CD4-positive, alpha-beta memory T cell (primary cell): ENCODE measurements at regions of chr2 and their contacts with region 1.

Region 1: GRCh38 chr2:192162392-192163042 is 32.2 kb downstream of the TMEFF2 start:
- DNase-seq: peak; percentile 57 to 70 (median 64)
- H3K4me3 ChIP-seq: no peak overlapping the region
- H3K4me3 Mint-ChIP-seq: peak overlapping the region in 3 of 8 donors; percentile 11 to 43 (median 43)
- H3K27ac ChIP-seq: no peak overlapping the region
- H3K27ac Mint-ChIP-seq: no peak overlapping the region
- H3K4me1 ChIP-seq: peaks cover 9% of the 10 kb centered on the region
- H3K4me1 Mint-ChIP-seq: peaks cover 8 to 11% (median 10%) of the 10 kb centered on the region in 4 donors
- H3K27me3 ChIP-seq: no peaks in the 10 kb centered on the region
- H3K27me3 Mint-ChIP-seq: peaks cover 5 to 13% of the 10 kb centered on the region in 2 donors

Region 2: DNA sequence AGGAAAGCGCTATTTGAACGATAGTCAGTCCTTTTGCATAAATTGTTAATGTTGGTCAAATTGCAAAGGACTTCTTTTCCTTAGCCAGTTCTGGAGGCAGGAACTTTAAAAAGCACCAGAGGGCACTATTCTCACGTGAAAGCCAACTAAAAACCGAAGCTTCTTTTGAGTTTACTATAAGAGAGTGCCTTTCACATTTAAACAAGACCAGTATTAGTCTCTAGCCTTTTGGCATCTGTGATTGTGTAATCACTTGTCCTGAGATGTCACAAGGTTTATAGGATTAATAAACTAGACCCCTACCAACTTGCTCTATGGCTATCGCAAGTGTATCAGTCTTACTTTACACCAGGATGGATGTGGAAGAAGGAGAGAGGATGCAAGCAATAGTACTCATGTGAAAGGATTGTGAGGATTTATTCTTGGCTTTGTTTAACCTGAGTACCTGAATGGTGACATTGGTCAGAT is 997.3 kb before region 1 on chr2:
- CTCF ChIA-PET with region 1: interaction called, 21 read pairs
- POLR2A ChIA-PET with region 1: no interaction called
- intact Hi-C with region 1: loop called (anchors 1 kb)
- DNase-seq: peak in 4 of 5 donors; percentile 45 to 57 (median 48)
- H3K4me3 ChIP-seq: no peak overlapping the region
- H3K4me3 Mint-ChIP-seq: no peak overlapping the region
- H3K27ac ChIP-seq: no peak overlapping the region
- H3K27ac Mint-ChIP-seq: peak overlapping the region in 2 of 7 donors; percentile 54 to 77
- H3K4me1 ChIP-seq: no peaks in the 10 kb centered on the region
- H3K4me1 Mint-ChIP-seq: peaks cover 5 to 6% (median 6%) of the 10 kb centered on the region in 4 donors
- H3K27me3 ChIP-seq: no peaks in the 10 kb centered on the region
- H3K27me3 Mint-ChIP-seq: peaks cover 0 to under 1% of the 10 kb centered on the region in 2 donors

Region 3: DNA sequence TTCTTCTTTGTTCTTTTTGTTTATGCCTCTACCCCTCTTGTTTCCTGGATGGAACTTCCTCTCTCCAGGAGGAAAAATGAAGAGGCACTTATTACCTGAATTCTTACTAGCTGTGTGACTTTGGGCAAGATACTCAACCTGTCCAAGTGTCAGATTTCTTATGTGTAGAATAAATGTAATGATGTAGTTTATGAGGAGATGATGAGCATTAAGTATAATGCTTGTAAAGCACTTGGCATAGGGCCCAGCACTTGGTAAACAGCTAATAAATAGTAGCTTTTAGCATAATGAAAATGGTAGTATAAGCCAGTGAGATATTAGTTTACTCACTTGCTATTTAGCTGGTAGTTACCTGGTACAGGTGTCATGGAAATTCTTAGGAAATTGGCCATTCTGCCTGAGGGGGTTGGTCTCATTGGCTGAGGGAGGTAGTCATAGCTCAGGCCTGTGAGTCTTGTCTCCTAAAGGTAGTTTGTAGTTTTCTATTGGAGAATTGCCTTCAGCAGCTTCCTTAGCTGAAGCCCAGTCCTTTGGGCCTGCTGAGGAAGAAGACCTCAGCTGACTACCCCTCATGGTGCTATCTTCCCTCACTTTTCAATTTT is 618.0 kb before region 1 on chr2:
- CTCF ChIA-PET with region 1: interaction called, 28 read pairs
- POLR2A ChIA-PET with region 1: no interaction called
- intact Hi-C with region 1: no loop called
- DNase-seq: no peak
- H3K4me3 ChIP-seq: no peak overlapping the region
- H3K4me3 Mint-ChIP-seq: no peak overlapping the region
- H3K27ac ChIP-seq: no peak overlapping the region
- H3K27ac Mint-ChIP-seq: no peak overlapping the region
- H3K4me1 ChIP-seq: no peaks in the 10 kb centered on the region
- H3K4me1 Mint-ChIP-seq: no peaks in the 10 kb centered on the region
- H3K27me3 ChIP-seq: no peaks in the 10 kb centered on the region
- H3K27me3 Mint-ChIP-seq: peaks cover 2 to 4% of the 10 kb centered on the region in 2 donors

Region 4: DNA sequence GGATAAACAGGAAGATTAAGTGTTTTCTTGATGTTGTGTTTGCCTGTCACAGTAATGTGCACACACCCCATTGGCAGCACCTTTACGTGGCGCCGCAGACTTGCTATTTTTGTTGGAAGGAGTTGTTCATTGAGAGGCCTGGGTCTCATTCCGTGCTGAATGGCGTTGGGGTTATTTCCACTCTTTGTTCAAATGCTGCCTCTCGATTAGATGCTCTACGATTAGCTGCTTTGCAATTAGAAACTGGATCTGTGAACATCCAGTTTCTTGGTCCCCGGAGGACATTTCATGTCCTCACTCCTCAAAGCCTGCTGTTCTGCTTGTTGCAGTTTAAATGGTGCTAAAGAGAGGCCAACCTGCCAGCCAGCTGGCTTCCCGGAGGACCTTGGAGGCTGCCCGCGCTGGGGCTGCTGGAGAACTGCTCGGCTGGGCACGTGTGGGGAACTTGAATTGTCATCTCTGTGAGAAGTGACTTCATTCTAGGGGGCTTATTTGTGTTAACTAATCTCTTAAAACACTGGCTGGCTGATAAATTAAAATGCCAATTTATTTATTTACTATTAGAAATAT is 602.0 kb before region 1 on chr2:
- CTCF ChIA-PET with region 1: interaction called, 237 read pairs
- POLR2A ChIA-PET with region 1: no interaction called
- intact Hi-C with region 1: loop called (anchors 1 kb)
- DNase-seq: no peak
- H3K4me3 ChIP-seq: no peak overlapping the region
- H3K4me3 Mint-ChIP-seq: no peak overlapping the region
- H3K27ac ChIP-seq: no peak overlapping the region
- H3K27ac Mint-ChIP-seq: peak overlapping the region in 1 of 7 donors; percentile 11
- H3K4me1 ChIP-seq: no peaks in the 10 kb centered on the region
- H3K4me1 Mint-ChIP-seq: peaks cover 0 to 3% (median 0%) of the 10 kb centered on the region in 4 donors
- H3K27me3 ChIP-seq: peaks cover 7% of the 10 kb centered on the region
- H3K27me3 Mint-ChIP-seq: peaks cover 13 to 21% of the 10 kb centered on the region in 2 donors

Region 5: DNA sequence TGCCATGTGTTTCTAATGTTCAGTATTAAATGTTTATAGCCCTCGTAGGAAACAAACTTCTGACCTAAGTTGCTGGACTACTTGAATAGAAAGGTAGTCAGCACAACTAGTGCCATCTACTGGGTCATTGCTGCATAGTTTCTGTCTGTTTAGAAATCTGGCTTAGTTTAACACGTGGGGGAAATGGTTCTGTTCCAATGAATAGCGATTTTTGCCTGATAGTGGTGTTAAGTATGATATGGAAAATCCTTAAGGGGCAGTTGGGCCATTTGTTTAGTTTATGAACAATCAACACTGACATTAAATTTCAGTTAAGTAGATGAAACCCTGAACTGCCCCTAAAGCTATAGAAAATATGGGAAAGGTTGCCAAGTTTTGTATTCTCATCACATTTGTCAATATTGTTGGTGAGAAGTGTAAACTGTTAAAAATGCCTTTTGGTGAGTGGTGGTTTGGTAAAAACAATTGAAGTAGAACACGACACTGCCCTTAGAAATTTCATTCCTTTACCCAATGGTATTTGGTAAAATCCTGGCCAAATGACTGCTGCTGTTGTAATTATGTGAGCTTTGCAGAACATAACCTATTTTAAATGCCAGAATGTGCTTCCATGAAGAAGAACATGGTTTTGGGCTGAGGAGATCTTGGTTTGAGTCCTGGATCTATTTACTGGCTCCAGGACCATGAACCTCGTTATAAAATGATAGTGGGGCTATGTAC is 471.3 kb before region 1 on chr2:
- CTCF ChIA-PET with region 1: interaction called, 18 read pairs
- POLR2A ChIA-PET with region 1: no interaction called
- intact Hi-C with region 1: loop called (anchors 1 kb)
- DNase-seq: peak; percentile 61 to 67 (median 65)
- H3K4me3 ChIP-seq: no peak overlapping the region
- H3K4me3 Mint-ChIP-seq: no peak overlapping the region
- H3K27ac ChIP-seq: no peak overlapping the region
- H3K27ac Mint-ChIP-seq: peak overlapping the region; percentile 40 to 90 (median 73)
- H3K4me1 ChIP-seq: peaks cover 30% of the 10 kb centered on the region
- H3K4me1 Mint-ChIP-seq: peaks cover 20 to 46% (median 32%) of the 10 kb centered on the region in 4 donors
- H3K27me3 ChIP-seq: no peaks in the 10 kb centered on the region
- H3K27me3 Mint-ChIP-seq: no peaks in the 10 kb centered on the region

Region 6: DNA sequence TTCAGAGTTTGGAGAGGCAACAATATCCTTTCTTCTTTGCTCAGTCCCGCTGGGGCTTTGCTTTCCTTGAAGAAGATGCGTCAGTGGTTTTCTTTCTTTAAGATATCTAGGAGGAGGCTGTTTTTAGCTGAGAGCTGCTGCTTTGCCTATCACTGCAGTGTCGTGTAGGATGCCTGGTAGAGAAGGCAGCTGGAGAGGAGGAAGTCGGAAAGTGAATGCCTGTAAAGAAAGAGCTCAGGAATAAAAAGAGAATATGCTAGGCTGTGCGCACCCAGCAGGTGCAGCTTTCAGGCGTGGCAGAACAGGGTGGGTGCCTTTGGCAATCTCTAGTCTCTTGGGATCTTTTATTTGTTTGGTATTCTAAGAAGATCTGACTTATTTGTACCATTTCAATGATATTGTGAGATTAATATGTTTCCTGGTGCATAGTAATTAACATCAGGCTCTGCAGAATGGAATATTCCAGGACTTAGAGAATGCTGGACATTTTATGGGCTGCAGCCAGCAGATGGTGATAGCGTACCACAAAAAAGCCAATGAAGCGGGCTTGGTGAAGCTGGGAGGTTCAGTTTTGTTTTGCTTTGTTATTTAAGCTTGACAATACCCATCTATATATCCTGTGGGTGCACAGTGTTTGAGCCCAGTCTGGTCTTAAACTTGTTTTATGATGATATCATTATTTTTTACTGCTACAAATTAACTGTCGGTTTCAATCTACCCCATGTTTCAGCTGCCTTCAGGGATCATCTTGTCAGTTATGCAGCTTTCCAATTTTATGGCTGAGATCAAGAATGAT is 350.5 kb before region 1 on chr2:
- CTCF ChIA-PET with region 1: interaction called, 16 read pairs
- POLR2A ChIA-PET with region 1: no interaction called
- intact Hi-C with region 1: loop called (anchors 1 kb)
- DNase-seq: peak in 4 of 5 donors; percentile 5 to 16 (median 10)
- H3K4me3 ChIP-seq: no peak overlapping the region
- H3K4me3 Mint-ChIP-seq: no peak overlapping the region
- H3K27ac ChIP-seq: no peak overlapping the region
- H3K27ac Mint-ChIP-seq: no peak overlapping the region
- H3K4me1 ChIP-seq: no peaks in the 10 kb centered on the region
- H3K4me1 Mint-ChIP-seq: peaks cover 0 to 1% (median 0%) of the 10 kb centered on the region in 4 donors
- H3K27me3 ChIP-seq: no peaks in the 10 kb centered on the region
- H3K27me3 Mint-ChIP-seq: peaks cover 8 to 13% of the 10 kb centered on the region in 2 donors

Region 7: DNA sequence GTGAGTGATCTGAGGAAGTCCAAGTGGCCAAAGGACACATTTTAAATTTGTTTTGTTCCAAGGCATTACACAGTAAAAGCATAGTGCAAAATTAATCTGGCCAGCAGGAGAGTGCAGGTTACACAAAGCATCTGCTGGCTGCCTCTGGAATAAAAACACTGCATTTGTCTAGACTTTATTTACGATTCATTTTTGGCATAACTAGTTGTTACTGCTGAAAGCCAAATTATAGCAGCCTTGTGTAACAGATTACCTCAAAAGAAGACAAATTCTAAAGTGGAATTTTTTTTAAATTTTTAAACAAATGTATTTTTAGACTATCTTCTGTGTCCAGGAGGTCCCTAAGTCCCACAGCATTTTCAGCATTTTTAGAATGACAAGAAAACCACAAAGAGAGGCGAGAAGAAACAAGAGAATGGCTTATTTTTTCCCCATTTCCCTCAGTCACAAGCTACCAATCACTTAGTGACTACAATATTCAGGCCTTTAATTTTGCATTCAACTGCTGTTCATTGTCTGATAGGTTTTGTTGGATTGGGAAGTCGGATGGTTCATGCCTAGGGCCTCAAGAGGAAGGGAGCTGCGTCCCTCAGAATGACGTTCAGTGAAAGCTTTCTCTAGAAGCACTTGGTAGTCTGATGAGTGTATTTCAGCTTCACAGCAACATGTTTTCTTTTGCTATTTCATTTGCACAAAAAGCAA is 13.7 kb before region 1 on chr2:
- CTCF ChIA-PET with region 1: interaction called, 11 read pairs
- POLR2A ChIA-PET with region 1: no interaction called
- intact Hi-C with region 1: no loop called
- DNase-seq: no peak
- H3K4me3 ChIP-seq: no peak overlapping the region
- H3K4me3 Mint-ChIP-seq: no peak overlapping the region
- H3K27ac ChIP-seq: no peak overlapping the region
- H3K27ac Mint-ChIP-seq: no peak overlapping the region
- H3K4me1 ChIP-seq: no peaks in the 10 kb centered on the region
- H3K4me1 Mint-ChIP-seq: no peaks in the 10 kb centered on the region
- H3K27me3 ChIP-seq: no peaks in the 10 kb centered on the region
- H3K27me3 Mint-ChIP-seq: peaks cover 3 to 4% of the 10 kb centered on the region in 2 donors

Region 8: DNA sequence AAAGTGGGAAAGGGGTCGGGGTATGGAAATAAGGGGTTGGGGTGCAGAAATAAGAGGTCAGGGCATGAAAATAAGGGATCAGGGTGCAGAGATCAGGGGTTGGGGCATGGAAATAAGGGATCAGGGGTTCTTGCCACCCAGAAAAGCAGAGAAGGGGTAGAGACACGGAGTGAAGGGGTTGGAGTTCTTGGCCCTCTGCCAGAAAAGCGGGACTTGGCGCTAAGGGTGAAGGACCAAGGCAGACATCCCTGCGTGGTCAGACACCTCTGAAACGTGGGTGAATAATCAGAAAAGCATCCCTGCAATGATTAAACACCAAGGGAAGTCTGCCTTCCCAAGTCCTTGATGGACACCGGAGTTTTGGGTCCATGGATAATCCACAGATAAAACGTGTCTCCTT is 1972.9 kb after region 1 on chr2:
- CTCF ChIA-PET with region 1: no interaction called
- POLR2A ChIA-PET with region 1: no interaction called
- intact Hi-C with region 1: no loop called
- DNase-seq: peak in 1 of 5 donors; percentile 16
- H3K4me3 ChIP-seq: no peak overlapping the region
- H3K4me3 Mint-ChIP-seq: no peak overlapping the region
- H3K27ac ChIP-seq: no peak overlapping the region
- H3K27ac Mint-ChIP-seq: no peak overlapping the region
- H3K4me1 ChIP-seq: no peaks in the 10 kb centered on the region
- H3K4me1 Mint-ChIP-seq: no peaks in the 10 kb centered on the region
- H3K27me3 ChIP-seq: no peaks in the 10 kb centered on the region
- H3K27me3 Mint-ChIP-seq: peaks cover 2 to 4% of the 10 kb centered on the region in 2 donors